ENCODE measurements at regions of chr10 and their contacts with region 1.

Region 1: DNA sequence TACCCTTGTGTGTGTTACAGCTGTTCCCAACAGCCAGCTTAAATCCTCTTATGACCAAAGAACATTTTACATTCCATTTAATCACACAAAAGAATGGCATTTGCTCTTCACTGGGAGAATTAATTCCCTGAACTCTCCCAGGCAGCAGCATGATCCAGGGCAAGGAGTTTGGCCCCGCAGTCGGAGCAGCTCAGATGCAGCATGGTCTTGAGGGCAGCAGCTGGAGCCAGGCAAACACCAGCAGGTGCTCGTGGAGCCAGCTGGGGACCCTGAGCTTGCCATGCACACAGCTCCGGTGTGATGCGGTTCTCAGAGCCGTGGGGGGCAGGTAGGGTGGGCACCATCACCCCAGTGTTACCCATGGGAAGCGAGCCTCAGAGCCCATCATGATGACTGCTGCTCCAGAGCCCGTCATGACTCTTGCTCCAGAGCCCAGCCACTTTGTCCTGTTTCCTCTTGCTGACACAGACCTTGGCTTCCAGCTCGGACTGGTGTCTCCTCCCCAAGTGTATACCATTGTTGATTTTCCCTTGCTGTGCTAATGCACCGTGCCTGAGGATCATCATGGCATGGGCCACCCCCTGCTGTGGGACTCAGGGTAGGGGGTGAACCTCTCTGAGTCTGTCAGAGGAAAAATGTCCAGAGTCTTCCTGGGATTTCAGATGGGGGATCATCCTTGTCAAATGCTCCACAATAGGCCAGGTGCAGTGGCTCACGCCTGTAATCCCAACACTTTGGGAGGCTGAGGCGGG is 75.8 kb downstream of the ZRANB1 start:
- DNase-seq: no peak
- ATAC-seq: no peak
- H3K4me3 ChIP-seq: no peak overlapping the region
- H3K27ac ChIP-seq: no peak overlapping the region
- H3K4me1 ChIP-seq: no peaks in the 10 kb centered on the region
- H3K27me3 ChIP-seq: no peaks in the 10 kb centered on the region
- CTCF ChIP-seq: no peak
- POLR2A ChIP-seq: no peak
- RAD21 ChIP-seq: no peak

Region 2: GRCh38 chr10:124886195-124886594 is 131.5 kb before region 1 on chr10:
- CTCF ChIA-PET with region 1: no interaction called
- POLR2A ChIA-PET with region 1: no interaction called
- RAD21 ChIA-PET with region 1: no interaction called
- intact Hi-C with region 1: no loop called
- DNase-seq: no peak
- ATAC-seq: no peak
- H3K4me3 ChIP-seq: no peak overlapping the region
- H3K27ac ChIP-seq: no peak overlapping the region
- H3K4me1 ChIP-seq: peaks cover 2 to 4% of the 10 kb centered on the region in 2 experiments; a peak in 3 of 4 replicates
- H3K27me3 ChIP-seq: no peaks in the 10 kb centered on the region
- CTCF ChIP-seq: no peak
- POLR2A ChIP-seq: no peak
- RAD21 ChIP-seq: no peak

Region 3: GRCh38 chr10:124943301-124944092 is 74.2 kb before region 1 on chr10:
- CTCF ChIA-PET with region 1: no interaction called
- POLR2A ChIA-PET with region 1: no interaction called
- RAD21 ChIA-PET with region 1: no interaction called
- intact Hi-C with region 1: loop called (anchors 2 kb)
- DNase-seq: peak; percentile 7
- ATAC-seq: no peak
- H3K4me3 ChIP-seq: no peak overlapping the region
- H3K27ac ChIP-seq: no peak overlapping the region
- H3K4me1 ChIP-seq: peaks cover 0 to 6% of the 10 kb centered on the region in 2 experiments; a peak in 1 of 4 replicates
- H3K27me3 ChIP-seq: no peaks in the 10 kb centered on the region
- CTCF ChIP-seq: no peak
- POLR2A ChIP-seq: no peak
- RAD21 ChIP-seq: no peak

Region 4: GRCh38 chr10:124999433-125000365 is 18.0 kb before region 1 on chr10:
- CTCF ChIA-PET with region 1: no interaction called
- POLR2A ChIA-PET with region 1: no interaction called
- RAD21 ChIA-PET with region 1: no interaction called
- intact Hi-C with region 1: no loop called
- DNase-seq: no peak
- ATAC-seq: no peak
- H3K4me3 ChIP-seq: no peak overlapping the region
- H3K27ac ChIP-seq: no peak overlapping the region
- H3K4me1 ChIP-seq: no peaks in the 10 kb centered on the region
- H3K27me3 ChIP-seq: no peaks in the 10 kb centered on the region
- CTCF ChIP-seq: no peak
- POLR2A ChIP-seq: no peak
- RAD21 ChIP-seq: no peak

Measured in HCT116 (cell line).